K562 (cell line): ENCODE measurements at regions of chr1 and their contacts with region 1.

Region 1: DNA sequence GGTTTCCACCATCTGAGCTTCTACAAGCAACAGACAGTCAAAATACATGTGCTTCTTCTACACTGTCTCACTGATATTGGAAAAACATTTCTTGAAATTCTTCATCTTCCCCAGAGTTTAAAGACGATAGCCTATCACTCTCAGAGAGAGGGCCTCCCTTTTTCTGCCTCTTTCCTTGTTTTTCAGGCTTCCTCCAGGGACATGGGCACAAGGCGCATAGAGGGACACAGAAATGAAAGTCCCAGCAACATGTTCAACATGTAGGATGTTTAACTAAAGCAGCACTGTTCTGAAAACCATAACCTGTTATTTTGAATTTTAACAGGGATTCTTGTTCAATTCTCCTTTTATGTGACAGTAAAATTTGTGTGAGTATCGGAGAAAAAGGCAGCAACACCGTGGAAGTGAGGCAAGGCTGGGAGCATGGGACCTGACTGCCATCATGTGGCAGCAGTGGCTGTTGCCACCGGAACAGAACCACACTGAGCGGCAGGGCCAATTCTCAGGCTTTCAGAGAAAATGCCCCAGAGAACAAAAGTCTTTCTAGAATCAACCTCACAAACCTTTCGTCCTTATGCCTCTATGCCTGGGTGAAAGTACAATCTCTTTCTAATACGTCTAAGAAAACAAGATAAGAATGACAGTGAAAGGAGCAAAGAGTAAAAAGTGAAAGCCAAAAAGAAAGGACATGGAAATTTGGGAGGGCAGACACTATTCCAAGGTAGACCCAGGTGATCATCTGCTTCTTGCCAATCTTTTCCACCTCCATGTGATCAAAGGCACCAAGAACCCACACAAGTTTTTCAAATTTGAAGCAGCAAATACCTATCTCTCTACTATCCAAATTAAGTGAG is 54.5 kb downstream of the PCNX2 start:
- DNase-seq: peak; percentile 40 to 57 (median 50)
- ATAC-seq: peak; percentile 94
- H3K4me3 ChIP-seq: no peak overlapping the region
- H3K27ac ChIP-seq: no peak overlapping the region
- H3K4me1 ChIP-seq: no peaks in the 10 kb centered on the region
- H3K27me3 ChIP-seq: no peaks in the 10 kb centered on the region; a peak in 1 of 5 replicates
- CTCF ChIP-seq: peak; percentile 66 to 82 (median 75)
- EP300 ChIP-seq: no peak
- POLR2A ChIP-seq: no peak
- RAD21 ChIP-seq: peak; percentile 88 to 92

Region 2: GRCh38 chr1:231724876-231725724 is 1516.0 kb before region 1 on chr1:
- CTCF ChIA-PET with region 1: no interaction called
- POLR2A ChIA-PET with region 1: no interaction called
- in situ Hi-C with region 1: loop called (anchors 25 kb)
- intact Hi-C with region 1: no loop called
- DNase-seq: peak; percentile 50 to 83 (median 64)
- ATAC-seq: peak; percentile 100
- H3K4me3 ChIP-seq: no peak overlapping the region
- H3K27ac ChIP-seq: no peak overlapping the region
- H3K4me1 ChIP-seq: no peaks in the 10 kb centered on the region
- H3K27me3 ChIP-seq: peaks cover 3 to 4% of the 10 kb centered on the region in 2 experiments; a peak in 2 of 5 replicates
- CTCF ChIP-seq: peak; percentile 80 to 85 (median 85)
- EP300 ChIP-seq: no peak
- POLR2A ChIP-seq: no peak
- RAD21 ChIP-seq: peak; percentile 65 to 79

Region 3: GRCh38 chr1:231757101-231757404 is 1484.0 kb before region 1 on chr1:
- CTCF ChIA-PET with region 1: interaction called, 6 read pairs
- POLR2A ChIA-PET with region 1: no interaction called
- in situ Hi-C with region 1: no loop called
- intact Hi-C with region 1: loop called (anchors 1 kb)
- DNase-seq: no peak
- ATAC-seq: peak; percentile 74
- H3K4me3 ChIP-seq: no peak overlapping the region
- H3K27ac ChIP-seq: no peak overlapping the region
- H3K4me1 ChIP-seq: no peaks in the 10 kb centered on the region
- H3K27me3 ChIP-seq: peaks cover 2 to 5% of the 10 kb centered on the region in 2 experiments; a peak in 2 of 5 replicates
- CTCF ChIP-seq: no peak
- EP300 ChIP-seq: no peak
- POLR2A ChIP-seq: no peak
- RAD21 ChIP-seq: no peak; a peak in 1 of 4 replicates

Region 4: GRCh38 chr1:231866392-231867331 is 1374.4 kb before region 1 on chr1:
- CTCF ChIA-PET with region 1: interaction called, 6 read pairs
- POLR2A ChIA-PET with region 1: no interaction called
- in situ Hi-C with region 1: no loop called
- intact Hi-C with region 1: loop called (anchors 1 kb)
- DNase-seq: peak; percentile 61 to 65 (median 64)
- ATAC-seq: peak; percentile 76
- H3K4me3 ChIP-seq: no peak overlapping the region
- H3K27ac ChIP-seq: no peak overlapping the region
- H3K4me1 ChIP-seq: no peaks in the 10 kb centered on the region
- H3K27me3 ChIP-seq: peaks cover 3 to 4% of the 10 kb centered on the region in 2 experiments; a peak in 1 of 5 replicates
- CTCF ChIP-seq: peak; percentile 70 to 89 (median 86)
- EP300 ChIP-seq: no peak
- POLR2A ChIP-seq: no peak
- RAD21 ChIP-seq: peak; percentile 80 to 84

Region 5: DNA sequence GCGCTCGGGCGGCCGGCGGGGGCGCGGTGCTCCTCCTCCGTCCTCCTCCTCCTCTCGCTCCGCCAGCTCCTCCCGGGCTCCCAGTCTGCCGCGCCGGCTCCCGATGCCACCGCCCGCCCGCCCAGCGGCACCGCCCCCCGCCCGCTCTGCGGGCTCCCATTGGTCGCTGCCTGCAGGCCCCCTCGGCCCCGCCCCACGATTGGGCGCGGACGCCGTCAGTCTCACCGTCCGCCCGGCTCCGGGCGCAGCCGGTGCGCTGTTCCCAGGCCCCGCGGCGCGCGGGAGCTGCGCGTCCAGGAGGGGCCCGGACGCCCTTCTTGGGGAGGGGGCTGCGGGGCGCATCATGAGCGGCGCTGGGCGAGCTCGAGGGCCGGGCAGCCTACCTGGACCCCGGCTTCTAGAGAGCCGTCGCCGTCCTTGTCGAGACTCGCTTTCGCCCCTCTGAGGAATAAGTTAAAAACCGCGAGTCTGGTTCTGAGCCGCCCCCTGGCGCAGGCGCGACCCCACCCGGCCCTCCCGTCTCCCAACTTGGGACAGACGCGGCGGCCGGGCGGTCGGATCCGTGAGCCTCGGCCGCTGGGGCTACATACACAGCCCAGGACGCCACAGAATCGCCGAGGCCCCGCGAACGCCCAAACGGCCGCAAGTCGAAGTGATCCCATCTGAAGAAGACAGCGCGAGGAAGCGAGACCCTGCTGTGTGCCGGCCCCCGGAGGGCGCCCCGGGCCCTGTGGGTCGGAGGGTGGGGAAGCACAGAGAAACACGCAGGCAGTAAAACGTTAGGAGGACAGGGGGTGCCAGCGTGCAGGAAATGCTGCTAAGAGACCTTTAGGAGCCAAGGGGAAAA is 610.8 kb before region 1 on chr1 and contains the start of gene SIPA1L2:
- CTCF ChIA-PET with region 1: interaction called, 4 read pairs
- POLR2A ChIA-PET with region 1: no interaction called
- in situ Hi-C with region 1: loop called (anchors 25 kb)
- intact Hi-C with region 1: loop called (anchors 1 kb)
- DNase-seq: peak in 2 of 4 experiments; percentile 9 to 23
- ATAC-seq: no peak; the same call in 2 of the 3 replicates
- H3K4me3 ChIP-seq: no peak within 1 kb of the TSS
- H3K27ac ChIP-seq: no peak within 1 kb of the TSS
- H3K4me1 ChIP-seq: no peaks in the 10 kb centered on the region
- H3K27me3 ChIP-seq: peaks cover 0 to 3% of the 10 kb centered on the region in 2 experiments; a peak in 2 of 5 replicates
- CTCF ChIP-seq: peak in 1 of 3 experiments; percentile 29; a peak in 2 of 6 replicates
- EP300 ChIP-seq: no peak
- POLR2A ChIP-seq: no peak
- RAD21 ChIP-seq: peak in 1 of 2 experiments; percentile 24; a peak in 2 of 4 replicates
- polyA plus RNA-seq, gene SIPA1L2: not detected

Region 6: DNA sequence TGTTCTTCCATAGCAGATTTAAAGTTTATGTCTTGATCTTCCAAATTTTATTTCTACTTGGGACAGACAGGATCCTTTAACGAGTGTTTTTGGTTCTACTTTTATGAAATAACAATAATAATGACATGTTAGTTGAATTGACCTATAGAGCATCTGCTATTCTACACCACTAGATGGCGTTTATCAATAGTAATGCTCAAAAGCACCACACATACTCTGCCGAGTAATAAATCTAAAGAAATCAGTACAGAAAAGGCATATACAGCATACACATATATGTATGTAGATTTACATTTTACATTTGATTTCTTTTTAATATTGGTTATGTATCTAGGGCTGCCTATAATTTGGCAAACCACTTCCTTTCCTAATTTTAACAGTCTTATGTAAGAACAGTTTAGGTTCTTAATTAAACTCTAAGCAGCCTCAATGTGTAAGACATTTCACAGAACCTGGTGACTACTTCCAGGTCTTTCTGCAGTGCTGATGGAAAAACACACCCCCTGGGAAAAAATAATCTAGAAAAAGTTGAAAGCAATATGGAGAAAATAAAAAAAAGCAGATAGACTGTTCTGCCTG is 605.2 kb before region 1 on chr1:
- CTCF ChIA-PET with region 1: interaction called, 4 read pairs
- POLR2A ChIA-PET with region 1: no interaction called
- in situ Hi-C with region 1: loop called (anchors 25 kb)
- intact Hi-C with region 1: loop called (anchors 1 kb)
- DNase-seq: peak; percentile 41 to 56 (median 50)
- ATAC-seq: peak; percentile 90
- H3K4me3 ChIP-seq: no peak overlapping the region
- H3K27ac ChIP-seq: no peak overlapping the region
- H3K4me1 ChIP-seq: no peaks in the 10 kb centered on the region
- H3K27me3 ChIP-seq: peaks cover 0 to under 1% of the 10 kb centered on the region in 2 experiments; a peak in 2 of 5 replicates
- CTCF ChIP-seq: peak in 2 of 3 experiments; percentile 38 to 74; a peak in 4 of 6 replicates
- EP300 ChIP-seq: no peak
- POLR2A ChIP-seq: no peak
- RAD21 ChIP-seq: peak; percentile 85 to 87

Region 7: DNA sequence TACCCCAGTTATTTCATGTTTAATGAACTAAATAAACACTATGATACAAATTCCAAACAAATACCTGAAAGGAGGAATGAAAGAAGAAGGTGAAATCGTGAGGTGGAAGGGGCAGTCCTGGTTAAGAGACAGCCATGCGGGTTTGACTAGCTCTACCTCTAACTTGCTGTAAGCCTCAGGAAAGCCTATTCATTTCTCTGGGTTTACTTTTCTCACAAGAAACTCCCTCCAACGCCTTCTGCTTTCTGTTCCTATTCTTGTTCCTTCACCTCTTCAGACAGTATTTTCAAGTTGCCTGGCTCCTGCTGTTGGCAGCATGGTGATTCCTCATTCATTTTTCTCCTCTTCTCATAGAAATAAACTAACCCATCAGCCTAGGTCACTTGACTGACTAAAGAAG is 198.2 kb before region 1 on chr1:
- CTCF ChIA-PET with region 1: no interaction called
- POLR2A ChIA-PET with region 1: no interaction called
- in situ Hi-C with region 1: no loop called
- intact Hi-C with region 1: loop called (anchors 5 kb)
- DNase-seq: no peak
- ATAC-seq: no peak
- H3K4me3 ChIP-seq: no peak overlapping the region
- H3K27ac ChIP-seq: no peak overlapping the region
- H3K4me1 ChIP-seq: no peaks in the 10 kb centered on the region
- H3K27me3 ChIP-seq: no peaks in the 10 kb centered on the region
- CTCF ChIP-seq: no peak
- EP300 ChIP-seq: no peak
- POLR2A ChIP-seq: no peak
- RAD21 ChIP-seq: no peak

Region 8: DNA sequence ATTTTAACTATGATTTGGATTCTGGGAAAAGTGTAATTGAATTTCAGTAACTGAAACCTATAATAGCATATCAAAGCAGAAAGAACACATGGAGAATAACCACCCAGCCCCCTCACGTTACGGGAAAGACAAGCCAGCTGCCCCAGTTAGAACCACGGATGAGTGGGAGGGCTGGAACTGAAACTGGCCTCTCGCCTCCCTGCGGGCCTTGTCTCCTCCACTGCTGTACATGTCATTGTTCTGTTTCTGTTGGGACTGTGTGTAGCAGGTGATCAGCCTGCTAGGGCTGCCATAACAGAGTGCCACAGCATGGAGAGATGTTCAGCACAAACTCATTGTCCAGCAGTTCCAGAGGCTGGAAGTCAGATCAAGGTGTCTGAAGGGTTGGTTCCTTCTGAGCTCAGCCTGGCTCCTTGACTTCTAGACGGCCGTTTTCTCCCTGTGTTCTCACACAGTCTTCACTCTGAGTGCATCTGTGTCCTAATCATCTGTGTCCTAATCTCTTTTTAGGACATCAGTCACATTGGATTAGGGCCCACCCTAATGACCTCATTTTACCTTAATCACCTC is 138.9 kb after region 1 on chr1:
- CTCF ChIA-PET with region 1: no interaction called
- POLR2A ChIA-PET with region 1: no interaction called
- in situ Hi-C with region 1: no loop called
- intact Hi-C with region 1: no loop called
- DNase-seq: no peak
- ATAC-seq: peak; percentile 33; the same call in 2 of the 3 replicates
- H3K4me3 ChIP-seq: no peak overlapping the region
- H3K27ac ChIP-seq: no peak overlapping the region
- H3K4me1 ChIP-seq: no peaks in the 10 kb centered on the region
- H3K27me3 ChIP-seq: peaks cover 0 to 14% of the 10 kb centered on the region in 2 experiments; a peak in 2 of 5 replicates
- CTCF ChIP-seq: no peak
- EP300 ChIP-seq: no peak
- POLR2A ChIP-seq: no peak
- RAD21 ChIP-seq: no peak